HAP-1 (cell line): ENCODE measurements at regions of chr7 and their contacts with region 1.

Region 1: DNA sequence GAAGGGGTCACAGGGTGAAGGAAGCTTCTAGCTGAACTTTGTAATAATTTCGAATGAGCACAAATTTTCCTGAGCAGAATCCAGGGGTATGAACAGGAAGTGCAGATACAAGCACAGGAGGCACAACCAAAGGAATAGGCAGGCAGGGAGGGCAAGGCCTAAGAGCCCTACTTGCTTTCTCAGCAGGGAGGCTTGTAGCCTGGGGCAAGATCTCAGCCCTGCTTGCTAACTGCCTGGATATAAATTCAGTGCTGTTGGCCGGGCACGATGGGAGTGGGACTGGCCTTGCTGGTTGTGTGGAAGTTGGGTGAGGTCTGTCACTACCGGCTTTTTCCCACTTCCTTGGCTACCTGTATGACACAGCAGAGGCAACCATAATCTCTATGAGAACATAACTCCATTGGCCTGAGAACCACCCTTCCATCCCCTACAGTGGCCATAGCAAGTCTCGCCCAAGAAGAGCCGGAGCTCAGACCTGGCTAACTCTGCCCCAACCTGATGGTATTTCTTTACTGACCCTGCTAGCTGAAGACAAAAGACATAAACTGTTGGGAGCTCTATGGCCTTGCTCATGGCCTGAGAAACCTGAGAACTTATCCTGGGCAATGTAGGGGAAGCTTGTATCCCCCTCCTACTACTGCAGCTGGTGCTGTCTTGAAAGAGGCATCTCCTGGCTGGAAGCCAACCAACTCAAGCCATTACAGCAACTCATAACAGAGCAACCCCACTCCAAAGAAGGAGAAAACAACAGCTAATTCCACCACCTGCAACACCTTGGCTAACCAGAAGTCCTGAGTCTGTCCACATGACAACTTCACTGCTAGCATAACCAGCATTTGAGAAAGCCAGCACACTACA is 27.6 kb downstream of the CLDN12 start:
- DNase-seq: no peak
- H3K4me3 ChIP-seq: no peak overlapping the region
- H3K4me1 ChIP-seq: no peaks in the 10 kb centered on the region
- H3K27me3 ChIP-seq: no peaks in the 10 kb centered on the region

Region 2: GRCh38 chr7:90155206-90155605 is 275.6 kb before region 1 on chr7:
- in situ Hi-C with region 1: loop called (anchors 10 kb)
- DNase-seq: no peak
- H3K4me3 ChIP-seq: no peak overlapping the region
- H3K4me1 ChIP-seq: peaks cover 17% of the 10 kb centered on the region
- H3K27me3 ChIP-seq: no peaks in the 10 kb centered on the region